Activated CD4-positive, alpha-beta memory T cell treated with anti-CD3 and anti-CD28 coated beads for 36 hours (primary cell): ENCODE measurements at regions of chr7 and their contacts with region 1.

Region 1: GRCh38 chr7:123748734-123749536 is at the start of gene WASL:
- DNase-seq: peak; percentile 92
- H3K4me3 Mint-ChIP-seq: peak within 1 kb of the TSS; percentile 95
- H3K27ac Mint-ChIP-seq: peak within 1 kb of the TSS; percentile 95
- H3K4me1 Mint-ChIP-seq: peaks cover 53% of the 10 kb centered on the region
- H3K27me3 Mint-ChIP-seq: no peaks in the 10 kb centered on the region
- total RNA-seq, gene WASL: 5.1 to 5.9 TPM

Region 2: GRCh38 chr7:123534383-123535260 is 214.3 kb before region 1 on chr7 and contains the start of gene IQUB:
- CTCF ChIA-PET with region 1: no interaction called
- POLR2A ChIA-PET with region 1: interaction called, 3 read pairs
- intact Hi-C with region 1: loop called (anchors 1 kb)
- DNase-seq: peak; percentile 98
- H3K4me3 Mint-ChIP-seq: peak within 1 kb of the TSS; percentile 78
- H3K27ac Mint-ChIP-seq: peak within 1 kb of the TSS; percentile 72
- H3K4me1 Mint-ChIP-seq: peaks cover 29% of the 10 kb centered on the region
- H3K27me3 Mint-ChIP-seq: peaks cover 20% of the 10 kb centered on the region
- total RNA-seq, gene IQUB: 0.10 TPM in 1 of 2 experiments, not detected in the other

Region 3: GRCh38 chr7:123635551-123636359 is 113.2 kb before region 1 on chr7:
- CTCF ChIA-PET with region 1: no interaction called
- POLR2A ChIA-PET with region 1: no interaction called
- intact Hi-C with region 1: no loop called
- DNase-seq: no peak
- H3K4me3 Mint-ChIP-seq: no peak overlapping the region
- H3K27ac Mint-ChIP-seq: no peak overlapping the region
- H3K4me1 Mint-ChIP-seq: no peaks in the 10 kb centered on the region
- H3K27me3 Mint-ChIP-seq: peaks cover 17% of the 10 kb centered on the region

Region 4: GRCh38 chr7:123682690-123683089 is 66.2 kb before region 1 on chr7:
- CTCF ChIA-PET with region 1: no interaction called
- POLR2A ChIA-PET with region 1: no interaction called
- intact Hi-C with region 1: loop called (anchors 2 kb)
- DNase-seq: no peak
- H3K4me3 Mint-ChIP-seq: no peak overlapping the region
- H3K27ac Mint-ChIP-seq: no peak overlapping the region
- H3K4me1 Mint-ChIP-seq: no peaks in the 10 kb centered on the region
- H3K27me3 Mint-ChIP-seq: no peaks in the 10 kb centered on the region

Region 5: DNA sequence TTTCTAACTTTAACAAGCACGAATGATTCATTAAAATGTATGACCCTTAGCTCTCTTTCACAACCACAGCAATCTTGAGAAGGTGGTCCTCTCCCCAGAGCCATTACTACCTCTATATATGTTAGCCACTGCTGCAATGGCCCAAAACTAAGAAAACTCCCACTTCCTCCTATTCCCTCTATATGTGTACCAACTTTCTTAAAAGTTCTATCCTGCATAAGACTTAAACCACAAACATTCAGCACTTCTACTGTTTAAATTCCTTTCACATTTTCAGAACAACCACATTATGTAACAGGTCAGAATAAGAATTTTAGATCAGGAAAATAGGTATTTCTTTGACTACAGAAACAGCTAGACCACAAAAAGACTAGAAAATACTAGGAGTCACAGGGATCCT is 36.3 kb before region 1 on chr7:
- CTCF ChIA-PET with region 1: interaction called, 3 read pairs
- POLR2A ChIA-PET with region 1: interaction called, 3 read pairs
- intact Hi-C with region 1: loop called (anchors 1 kb)
- DNase-seq: no peak
- H3K4me3 Mint-ChIP-seq: no peak overlapping the region
- H3K27ac Mint-ChIP-seq: no peak overlapping the region
- H3K4me1 Mint-ChIP-seq: peaks cover 58% of the 10 kb centered on the region
- H3K27me3 Mint-ChIP-seq: no peaks in the 10 kb centered on the region

Region 6: GRCh38 chr7:123823898-123824753 is 75.2 kb after region 1 on chr7:
- CTCF ChIA-PET with region 1: no interaction called
- POLR2A ChIA-PET with region 1: interaction called, 3 read pairs
- intact Hi-C with region 1: loop called (anchors 1 kb)
- DNase-seq: peak; percentile 81
- H3K4me3 Mint-ChIP-seq: no peak overlapping the region
- H3K27ac Mint-ChIP-seq: no peak overlapping the region
- H3K4me1 Mint-ChIP-seq: peaks cover 18% of the 10 kb centered on the region
- H3K27me3 Mint-ChIP-seq: peaks cover 12% of the 10 kb centered on the region